Naive thymus-derived CD4-positive, alpha-beta T cell (primary cell): ENCODE measurements at regions of chr1 and their contacts with region 1.

Region 1: DNA sequence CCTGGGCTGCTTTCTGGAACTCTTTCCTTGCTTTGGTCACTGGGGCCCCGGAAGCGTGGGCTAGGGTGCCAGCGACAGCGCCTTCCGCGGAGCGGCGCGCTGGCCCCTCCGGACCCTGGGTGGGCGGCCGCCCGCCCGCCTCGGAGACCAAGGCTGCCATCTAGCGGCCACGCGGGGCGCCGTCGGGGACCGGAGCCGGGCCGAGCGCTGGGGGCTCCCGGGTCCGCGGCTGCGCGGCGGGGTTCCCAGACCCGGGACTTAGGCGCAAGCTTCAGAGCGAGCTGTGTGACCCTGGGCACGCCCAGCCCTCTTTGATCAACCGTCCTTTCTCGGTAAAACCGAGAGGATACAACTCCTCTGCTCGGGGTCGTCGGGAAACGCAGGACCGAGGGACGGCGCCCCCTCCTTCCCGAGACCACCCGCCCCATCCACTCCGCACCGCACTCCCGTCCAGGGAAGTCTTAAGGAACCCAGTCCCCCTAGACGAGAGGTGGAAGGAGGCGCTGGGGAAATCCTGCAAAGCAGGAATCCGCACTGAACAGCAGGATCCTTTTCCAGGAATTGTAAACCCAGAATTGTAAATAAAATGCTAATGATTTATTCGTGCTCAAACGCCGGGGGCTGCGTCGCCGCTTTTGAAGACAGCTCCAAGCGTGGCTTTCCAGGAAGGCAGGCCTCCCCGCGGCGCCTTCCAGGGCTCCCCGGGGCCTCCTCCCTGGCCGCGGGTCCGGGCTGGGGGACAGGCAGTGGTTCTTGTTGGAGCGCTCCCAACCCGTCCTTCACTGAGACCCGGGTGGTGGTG is 41.2 kb downstream of the RRAGC start:
- DNase-seq: peak in 7 of 9 donors; percentile 12 to 75 (median 42)
- ATAC-seq: peak; percentile 62
- H3K4me3 ChIP-seq: peak overlapping the region; percentile 24
- H3K4me3 Mint-ChIP-seq: peak overlapping the region in 8 of 10 donors; percentile 7 to 63 (median 31)
- H3K27ac ChIP-seq: no peak overlapping the region
- H3K27ac Mint-ChIP-seq: no peak overlapping the region
- H3K4me1 ChIP-seq: peaks cover 0 to 5% of the 10 kb centered on the region in 2 donors
- H3K4me1 Mint-ChIP-seq: peaks cover 0 to 21% (median 13%) of the 10 kb centered on the region in 7 donors
- H3K27me3 ChIP-seq: peaks cover 8% of the 10 kb centered on the region in 2 donors
- H3K27me3 Mint-ChIP-seq: peaks cover 62 to 77% (median 74%) of the 10 kb centered on the region in 5 donors

Region 2: DNA sequence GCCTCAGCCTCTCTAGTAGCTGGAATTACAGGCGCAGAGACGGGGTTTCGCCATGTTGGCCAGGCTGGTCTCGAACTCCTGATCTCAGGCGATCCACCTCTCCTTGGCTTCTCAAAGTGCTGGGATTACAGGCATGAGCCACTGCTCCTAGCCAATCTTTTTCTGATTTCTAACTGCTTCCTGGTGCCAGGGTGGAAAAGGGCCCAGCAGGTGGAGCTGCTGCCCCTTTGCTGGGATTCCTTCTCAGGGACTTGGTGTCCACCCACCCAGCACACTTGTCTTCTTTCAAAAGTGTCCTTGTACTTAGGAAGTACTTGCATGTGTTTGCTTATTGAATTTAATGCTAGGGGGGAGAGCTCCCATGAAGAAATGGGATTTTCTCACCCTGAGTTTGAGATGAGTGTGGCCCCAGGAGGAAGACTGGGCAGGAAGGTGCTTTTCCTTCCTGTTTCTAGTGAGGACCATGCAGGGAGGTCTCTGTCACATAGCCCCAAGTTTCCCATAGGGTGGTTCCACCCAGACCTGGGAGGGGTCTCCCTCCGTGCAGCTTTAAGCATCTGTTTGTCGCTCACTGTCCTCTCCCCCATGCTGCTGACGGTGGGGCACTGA is 791.7 kb before region 1 on chr1:
- CTCF ChIA-PET with region 1: no interaction called
- POLR2A ChIA-PET with region 1: no interaction called
- intact Hi-C with region 1: loop called in 1 of 2 experiments (anchors 5 kb)
- DNase-seq: no peak
- ATAC-seq: no peak
- H3K4me3 ChIP-seq: no peak overlapping the region
- H3K4me3 Mint-ChIP-seq: no peak overlapping the region
- H3K27ac ChIP-seq: no peak overlapping the region
- H3K27ac Mint-ChIP-seq: peak overlapping the region in 2 of 9 donors; percentile 38
- H3K4me1 ChIP-seq: peaks cover 12 to 32% of the 10 kb centered on the region in 2 donors
- H3K4me1 Mint-ChIP-seq: peaks cover 11 to 45% (median 25%) of the 10 kb centered on the region in 7 donors
- H3K27me3 ChIP-seq: no peaks in the 10 kb centered on the region
- H3K27me3 Mint-ChIP-seq: no peaks in the 10 kb centered on the region